Activated CD4-positive, alpha-beta T cell treated with anti-CD3 and anti-CD28 coated beads for 36 hours (primary cell): ENCODE measurements at regions of chr3 and their contacts with region 1.

Region 1: GRCh38 chr3:115301364-115301860 is 154.3 kb upstream of the ZBTB20 start:
- DNase-seq: no peak
- ATAC-seq: no peak
- H3K4me3 Mint-ChIP-seq: no peak overlapping the region
- H3K27ac Mint-ChIP-seq: no peak overlapping the region
- H3K4me1 Mint-ChIP-seq: no peaks in the 10 kb centered on the region
- H3K27me3 Mint-ChIP-seq: no peaks in the 10 kb centered on the region

Region 2: DNA sequence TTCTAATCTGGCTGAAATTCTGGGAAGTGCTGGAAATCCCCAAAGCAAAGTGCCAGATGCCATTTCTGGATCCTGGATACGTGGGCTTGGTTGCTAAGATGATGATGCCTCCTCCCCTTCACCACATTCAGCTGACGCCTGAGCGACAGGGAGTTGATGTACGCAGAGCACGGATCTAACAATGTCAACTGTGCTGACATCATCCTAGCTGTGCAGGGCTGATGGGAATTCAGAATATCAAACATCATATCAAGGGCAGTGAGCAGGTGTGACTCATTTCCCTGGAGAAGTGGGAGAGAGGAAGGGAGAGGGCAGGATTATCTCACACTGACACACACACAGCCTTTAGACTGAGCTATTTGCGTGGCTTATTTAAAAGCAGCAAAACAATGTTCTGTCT is 61.7 kb before region 1 on chr3:
- CTCF ChIA-PET with region 1: no interaction called
- POLR2A ChIA-PET with region 1: interaction called, 11 read pairs
- intact Hi-C with region 1: no loop called
- DNase-seq: no peak
- ATAC-seq: no peak
- H3K4me3 Mint-ChIP-seq: no peak overlapping the region
- H3K27ac Mint-ChIP-seq: no peak overlapping the region
- H3K4me1 Mint-ChIP-seq: no peaks in the 10 kb centered on the region
- H3K27me3 Mint-ChIP-seq: no peaks in the 10 kb centered on the region

Region 3: DNA sequence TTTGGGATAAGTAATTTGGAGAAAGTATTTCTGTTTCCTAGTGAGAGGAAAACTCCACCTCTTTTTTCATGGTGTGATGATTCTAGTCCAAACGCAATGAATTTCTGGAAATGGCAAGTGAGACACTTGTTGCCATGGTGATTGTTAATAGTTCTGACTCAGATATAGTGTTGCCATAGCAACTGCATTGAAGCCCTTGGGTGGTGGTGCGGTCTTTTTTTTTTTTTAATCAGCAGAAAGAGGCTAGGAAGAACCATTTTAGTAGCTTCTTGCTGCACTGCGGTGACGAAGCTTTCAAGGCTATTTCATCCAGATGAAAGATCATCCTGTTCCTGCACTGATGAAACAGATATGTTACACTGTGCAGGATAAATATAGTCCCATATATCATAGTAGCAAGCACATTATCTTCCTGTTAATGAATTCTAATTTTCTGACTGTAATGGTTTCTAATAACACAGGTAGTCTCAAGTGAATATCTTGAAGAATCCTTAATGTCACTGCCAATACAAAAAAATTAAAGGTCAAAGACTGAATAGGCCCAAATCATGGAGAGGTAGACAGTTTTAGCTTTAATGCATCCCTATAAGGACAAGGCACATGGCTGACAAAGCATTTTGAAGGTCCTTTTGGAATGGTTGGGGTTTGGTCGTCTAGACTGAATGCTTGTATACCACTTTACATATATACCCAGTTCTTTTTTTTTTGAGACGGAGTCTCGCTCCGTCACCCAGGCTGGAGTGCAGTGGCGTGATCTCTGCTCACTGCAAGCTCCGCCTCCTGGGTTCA is 29.2 kb before region 1 on chr3:
- CTCF ChIA-PET with region 1: no interaction called
- POLR2A ChIA-PET with region 1: no interaction called
- intact Hi-C with region 1: no loop called
- DNase-seq: no peak
- ATAC-seq: no peak
- H3K4me3 Mint-ChIP-seq: no peak overlapping the region
- H3K27ac Mint-ChIP-seq: no peak overlapping the region
- H3K4me1 Mint-ChIP-seq: no peaks in the 10 kb centered on the region
- H3K27me3 Mint-ChIP-seq: no peaks in the 10 kb centered on the region